MCF 10A (cell line): ENCODE measurements at regions of chr4 and their contacts with region 1.

Region 1: GRCh38 chr4:163544407-163545038 is 50.0 kb downstream of the TMA16 start:
- DNase-seq: peak; percentile 63
- H3K4me3 Mint-ChIP-seq: no peak overlapping the region
- H3K27ac Mint-ChIP-seq: no peak overlapping the region
- H3K4me1 Mint-ChIP-seq: peaks cover 5% of the 10 kb centered on the region
- H3K27me3 Mint-ChIP-seq: no peaks in the 10 kb centered on the region
- CTCF ChIP-seq: peak; percentile 80

Region 2: DNA sequence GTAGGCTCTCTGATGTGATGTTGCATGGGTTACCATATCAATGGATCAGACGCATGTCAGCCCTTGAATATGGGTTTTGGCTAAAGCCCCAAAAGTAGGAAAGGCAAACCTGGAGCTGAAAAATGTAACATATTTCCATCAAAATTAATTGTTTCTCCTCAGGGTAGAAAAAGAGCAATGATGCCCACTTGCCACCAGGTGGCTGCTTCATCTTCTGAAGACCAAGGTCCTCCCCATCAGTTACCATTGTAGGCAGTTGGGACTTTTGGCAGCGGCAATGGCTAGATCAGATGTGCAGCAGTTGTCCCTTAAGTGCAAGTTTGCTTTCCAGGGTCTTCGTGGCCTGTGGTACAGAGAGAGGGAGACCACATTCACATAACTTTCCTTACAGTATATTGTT is 496.1 kb before region 1 on chr4:
- CTCF ChIA-PET with region 1: interaction called, 17 read pairs
- POLR2A ChIA-PET with region 1: no interaction called
- intact Hi-C with region 1: loop called (anchors 1 kb)
- DNase-seq: peak; percentile 51
- H3K4me3 Mint-ChIP-seq: no peak overlapping the region
- H3K27ac Mint-ChIP-seq: no peak overlapping the region
- H3K4me1 Mint-ChIP-seq: no peaks in the 10 kb centered on the region
- H3K27me3 Mint-ChIP-seq: no peaks in the 10 kb centered on the region
- CTCF ChIP-seq: peak; percentile 41

Region 3: DNA sequence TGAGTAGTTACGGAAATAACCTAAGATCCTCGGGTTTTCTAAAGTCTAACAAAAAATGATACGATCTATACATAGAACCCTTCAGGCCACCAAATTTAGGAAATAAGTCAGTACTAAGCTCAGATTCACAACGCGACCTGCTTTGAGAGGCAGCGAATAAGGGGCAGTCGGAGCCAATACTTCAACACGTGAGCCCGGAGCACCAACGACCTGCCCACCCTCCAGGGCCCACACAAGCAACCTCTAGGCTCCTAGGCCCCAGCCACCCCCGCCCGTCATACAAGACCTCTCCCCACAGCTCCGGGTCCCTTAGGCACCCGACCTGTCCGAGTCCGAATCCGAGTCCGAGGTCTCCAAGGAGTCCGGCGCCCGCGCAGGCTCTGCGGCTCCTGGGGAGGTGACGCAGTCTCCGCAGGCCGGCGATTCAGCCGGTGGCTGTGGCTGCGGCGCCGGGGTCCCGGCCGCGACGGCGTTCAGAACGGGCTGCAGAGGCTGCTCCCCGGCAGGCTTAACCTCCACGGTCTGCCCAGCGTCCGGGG is 378.4 kb before region 1 on chr4:
- CTCF ChIA-PET with region 1: interaction called, 3 read pairs
- POLR2A ChIA-PET with region 1: no interaction called
- intact Hi-C with region 1: loop called (anchors 10 kb)
- DNase-seq: peak; percentile 63
- H3K4me3 Mint-ChIP-seq: peak overlapping the region; percentile 77
- H3K27ac Mint-ChIP-seq: peak overlapping the region; percentile 99
- H3K4me1 Mint-ChIP-seq: peaks cover 26% of the 10 kb centered on the region
- H3K27me3 Mint-ChIP-seq: no peaks in the 10 kb centered on the region
- CTCF ChIP-seq: no peak

Region 4: DNA sequence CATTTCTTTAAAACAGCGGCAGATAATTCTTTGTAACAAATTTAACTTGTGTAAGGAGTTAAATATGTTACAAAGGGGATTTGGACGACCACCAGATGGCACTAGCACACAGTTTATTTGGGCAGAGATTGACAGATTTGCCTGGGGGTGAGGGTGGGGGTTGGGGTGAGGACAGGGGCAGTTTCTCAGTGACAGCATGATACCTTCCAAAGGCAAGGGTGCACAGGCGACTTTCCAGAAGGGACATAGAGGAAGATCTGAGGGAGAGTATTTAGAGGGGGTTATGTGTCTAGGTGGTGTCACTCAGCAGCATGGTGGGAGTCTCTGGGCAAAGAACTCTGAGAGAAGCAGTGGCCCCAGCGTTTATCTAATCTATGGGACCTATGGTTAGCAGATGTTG is 59.6 kb before region 1 on chr4:
- CTCF ChIA-PET with region 1: interaction called, 6 read pairs
- POLR2A ChIA-PET with region 1: no interaction called
- intact Hi-C with region 1: loop called (anchors 1 kb)
- DNase-seq: peak; percentile 62
- H3K4me3 Mint-ChIP-seq: no peak overlapping the region
- H3K27ac Mint-ChIP-seq: no peak overlapping the region
- H3K4me1 Mint-ChIP-seq: no peaks in the 10 kb centered on the region
- H3K27me3 Mint-ChIP-seq: no peaks in the 10 kb centered on the region
- CTCF ChIP-seq: peak; percentile 43

Region 5: DNA sequence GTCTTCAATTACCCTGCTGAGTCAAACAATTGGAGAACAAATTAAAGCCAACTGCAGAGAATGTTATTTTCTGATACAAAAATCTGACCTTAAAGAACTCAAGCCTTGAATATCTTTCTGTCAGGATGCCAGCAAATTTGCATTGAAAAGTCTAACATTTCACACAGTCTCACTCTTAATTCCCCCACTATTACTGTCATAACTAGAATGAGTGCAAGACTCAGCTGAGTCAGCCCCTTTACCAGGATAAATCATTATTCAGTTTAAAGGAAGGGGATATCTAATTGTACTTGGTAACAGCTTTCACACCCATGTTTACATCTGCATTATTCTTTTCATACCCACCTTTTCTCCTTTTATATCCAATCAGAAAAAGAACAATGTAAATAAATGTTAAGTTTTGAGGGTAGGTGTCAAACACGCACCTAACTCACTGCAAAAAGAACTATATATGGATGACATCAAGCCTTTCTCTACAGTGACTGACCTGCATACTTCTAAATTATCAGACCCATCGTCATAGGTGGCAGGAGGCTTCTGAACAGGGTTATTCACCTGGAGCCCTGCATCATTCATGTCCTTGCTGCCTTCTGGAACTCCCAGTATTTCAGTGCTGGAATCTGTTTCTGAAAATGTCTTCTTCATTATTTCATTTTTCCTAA is 67.4 kb after region 1 on chr4:
- CTCF ChIA-PET with region 1: no interaction called
- POLR2A ChIA-PET with region 1: no interaction called
- intact Hi-C with region 1: no loop called
- DNase-seq: no peak
- H3K4me3 Mint-ChIP-seq: no peak overlapping the region
- H3K27ac Mint-ChIP-seq: no peak overlapping the region
- H3K4me1 Mint-ChIP-seq: no peaks in the 10 kb centered on the region
- H3K27me3 Mint-ChIP-seq: no peaks in the 10 kb centered on the region
- CTCF ChIP-seq: no peak

Region 6: DNA sequence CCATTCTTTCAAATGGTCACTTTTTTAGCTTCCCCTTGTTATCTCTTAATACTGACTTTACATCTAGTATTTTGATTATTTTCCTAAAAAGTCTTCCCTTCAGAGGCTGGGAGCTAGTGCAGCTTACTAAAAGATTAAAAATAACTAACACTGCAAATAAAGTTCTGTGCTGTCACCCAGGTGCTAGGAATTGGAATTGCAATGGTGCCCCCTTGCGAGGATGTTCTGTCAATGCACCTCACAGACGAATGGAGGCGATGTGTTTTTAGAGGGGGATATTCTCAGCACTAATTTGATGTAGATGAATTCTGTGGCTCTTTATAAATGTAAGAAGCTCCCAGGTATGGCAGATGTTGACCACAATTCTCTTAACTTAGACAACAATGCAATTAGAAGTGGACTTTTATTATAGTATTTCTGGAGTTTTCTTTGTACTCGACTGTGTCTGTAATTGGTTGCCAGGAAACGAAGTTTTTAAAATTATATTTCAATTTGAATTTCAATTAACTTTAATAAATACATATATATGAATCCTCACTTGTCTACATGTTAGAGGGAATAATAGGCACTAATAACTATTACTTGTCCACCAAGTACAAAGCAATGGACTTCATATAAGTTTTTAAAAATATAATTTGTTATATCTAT is 1187.4 kb after region 1 on chr4:
- CTCF ChIA-PET with region 1: interaction called, 12 read pairs
- POLR2A ChIA-PET with region 1: no interaction called
- intact Hi-C with region 1: no loop called
- DNase-seq: peak; percentile 71
- H3K4me3 Mint-ChIP-seq: no peak overlapping the region
- H3K27ac Mint-ChIP-seq: no peak overlapping the region
- H3K4me1 Mint-ChIP-seq: no peaks in the 10 kb centered on the region
- H3K27me3 Mint-ChIP-seq: no peaks in the 10 kb centered on the region
- CTCF ChIP-seq: peak; percentile 88